Left colon (tissue), 2 donors: ENCODE measurements at regions of chr7 and their contacts with region 1.

Region 1: GRCh38 chr7:56009695-56010094 is 41.5 kb downstream of the PSPH start:
- DNase-seq: peak; percentile 31 to 47
- ATAC-seq: peak; percentile 86

Region 2: GRCh38 chr7:56074371-56074791 is 64.7 kb after region 1 on chr7:
- intact Hi-C with region 1: loop called (anchors 5 to 10 kb)
- DNase-seq: peak; percentile 85 to 87
- ATAC-seq: peak; percentile 98